Natural killer cell (primary cell): ENCODE measurements at regions of chr18 and their contacts with region 1.

Region 1: DNA sequence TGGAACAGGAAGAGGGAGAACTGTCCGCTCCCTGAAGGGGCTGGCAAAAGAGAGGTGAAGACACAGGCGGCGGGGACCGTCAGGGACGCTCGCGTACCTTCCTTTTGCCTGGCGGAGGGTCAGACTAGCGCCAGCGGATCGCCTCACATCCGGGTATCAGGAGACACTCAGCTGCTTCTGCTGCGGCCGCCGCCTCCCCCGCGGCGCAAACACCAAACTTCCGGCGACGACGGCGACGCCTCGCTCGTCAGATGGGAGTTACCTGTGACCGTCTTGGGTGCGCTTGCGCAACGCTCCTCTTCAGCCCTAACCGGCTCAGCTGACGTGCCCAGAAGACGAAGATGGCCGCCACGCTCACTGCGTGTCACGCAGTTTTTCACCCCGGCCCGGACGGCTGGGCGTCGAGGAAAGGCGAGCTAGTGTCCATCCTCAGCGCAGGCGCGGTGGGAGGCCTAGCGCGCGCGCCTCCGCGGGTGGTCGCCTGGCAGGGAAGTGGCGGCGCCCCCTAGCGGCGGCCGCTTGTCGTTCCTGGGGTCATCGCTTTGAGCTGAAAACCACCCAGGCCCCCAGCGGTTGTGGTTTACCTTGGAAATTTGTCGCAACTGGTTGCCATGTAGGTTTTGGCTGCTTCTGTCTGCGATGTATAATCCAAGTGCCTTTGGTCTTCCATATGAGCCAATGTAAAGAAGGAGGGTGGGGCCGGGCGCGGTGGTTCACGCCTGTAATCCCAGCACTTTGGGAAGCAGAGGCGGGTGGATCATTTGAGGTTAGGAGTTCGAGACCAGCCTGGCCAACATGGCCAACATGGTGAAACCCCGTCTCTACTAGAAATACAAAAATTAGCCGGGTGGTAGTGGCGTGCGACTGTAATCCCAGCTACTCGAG is at the start of gene ESCO1:
- DNase-seq: peak; percentile 94 to 99
- ATAC-seq: peak; percentile 87 to 95 (median 88)
- H3K4me3 ChIP-seq: peak within 1 kb of the TSS; percentile 97
- H3K4me3 Mint-ChIP-seq: peak within 1 kb of the TSS; percentile 98
- H3K27ac ChIP-seq: peak within 1 kb of the TSS; percentile 99
- H3K27ac Mint-ChIP-seq: peak within 1 kb of the TSS; percentile 97 to 99
- H3K4me1 ChIP-seq: peaks cover 22% of the 10 kb centered on the region
- H3K4me1 Mint-ChIP-seq: peaks cover 19 to 33% of the 10 kb centered on the region in 2 donors
- H3K27me3 ChIP-seq: no peaks in the 10 kb centered on the region
- H3K27me3 Mint-ChIP-seq: no peaks in the 10 kb centered on the region
- CTCF ChIP-seq: peak; percentile 99
- total RNA-seq, gene ESCO1: 40.5 to 43.4 (median 42.8) TPM

Region 2: DNA sequence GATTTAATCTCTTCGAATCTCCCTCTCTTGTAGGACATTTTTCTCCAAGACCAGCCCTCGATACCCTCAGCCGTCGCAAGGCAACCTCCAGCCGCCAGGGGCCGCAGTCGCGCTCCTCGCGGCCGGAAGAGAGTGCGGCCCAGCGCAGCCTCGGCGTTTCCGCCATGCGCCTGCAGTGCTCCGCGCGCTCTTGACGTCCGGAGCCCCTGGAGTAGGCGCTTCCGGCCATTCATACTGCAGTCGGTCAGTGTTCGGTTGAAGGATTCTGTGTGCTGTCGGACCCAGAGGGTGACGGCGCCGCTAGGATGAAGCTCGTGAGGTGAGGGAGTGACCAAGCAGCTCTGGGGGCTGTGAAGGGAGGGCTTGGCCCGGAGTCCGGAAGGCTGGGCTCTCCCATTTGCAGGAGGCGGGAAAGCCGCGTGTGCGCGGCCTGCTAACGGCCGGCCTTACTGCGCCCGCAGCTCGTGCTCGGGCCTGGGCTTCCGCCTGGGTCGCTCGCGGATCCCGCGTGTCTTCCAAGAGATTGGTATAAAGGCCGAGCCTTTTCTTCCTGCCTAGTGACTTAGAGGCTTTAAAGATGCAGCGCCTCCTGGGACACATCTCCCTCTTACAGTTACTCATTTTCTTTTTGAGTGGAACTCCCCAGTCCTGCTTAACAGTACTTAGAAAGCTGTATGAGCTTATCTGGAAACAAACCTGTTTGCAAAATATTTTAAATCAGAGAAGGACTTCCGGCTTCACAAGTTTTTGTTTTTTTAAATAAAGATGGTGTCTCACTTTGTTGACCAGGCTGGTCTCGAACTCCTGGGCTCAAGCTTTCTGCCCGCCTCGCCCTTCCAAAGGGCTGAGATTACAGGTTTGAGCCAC is 11.6 kb after region 1 on chr18 and contains the start of gene SNRPD1:
- intact Hi-C with region 1: loop called (anchors 1 kb)
- DNase-seq: peak; percentile 90 to 94
- ATAC-seq: peak; percentile 98 to 100 (median 98)
- H3K4me3 ChIP-seq: peak within 1 kb of the TSS; percentile 58
- H3K4me3 Mint-ChIP-seq: peak within 1 kb of the TSS; percentile 99
- H3K27ac ChIP-seq: peak within 1 kb of the TSS; percentile 70
- H3K27ac Mint-ChIP-seq: peak within 1 kb of the TSS; percentile 96 to 98
- H3K4me1 ChIP-seq: peaks cover 14% of the 10 kb centered on the region
- H3K4me1 Mint-ChIP-seq: peaks cover 18 to 29% of the 10 kb centered on the region in 2 donors
- H3K27me3 ChIP-seq: no peaks in the 10 kb centered on the region
- H3K27me3 Mint-ChIP-seq: no peaks in the 10 kb centered on the region
- CTCF ChIP-seq: peak; percentile 89
- total RNA-seq, gene SNRPD1: 28.0 to 33.8 (median 31.6) TPM

Region 3: GRCh38 chr18:21740724-21741510 is 140.1 kb after region 1 on chr18 and contains the start of gene MIB1:
- intact Hi-C with region 1: loop called (anchors 1 kb)
- DNase-seq: peak; percentile 99
- ATAC-seq: peak; percentile 65 to 84 (median 74)
- H3K4me3 ChIP-seq: peak within 1 kb of the TSS; percentile 89
- H3K4me3 Mint-ChIP-seq: peak within 1 kb of the TSS; percentile 97
- H3K27ac ChIP-seq: peak within 1 kb of the TSS; percentile 96
- H3K27ac Mint-ChIP-seq: peak within 1 kb of the TSS; percentile 93 to 95
- H3K4me1 ChIP-seq: peaks cover 11% of the 10 kb centered on the region
- H3K4me1 Mint-ChIP-seq: peaks cover 27 to 30% of the 10 kb centered on the region in 2 donors
- H3K27me3 ChIP-seq: no peaks in the 10 kb centered on the region
- H3K27me3 Mint-ChIP-seq: peaks cover 7 to 10% of the 10 kb centered on the region in 2 donors
- CTCF ChIP-seq: no peak
- total RNA-seq, gene MIB1: 27.5 to 38.4 (median 35.6) TPM